ENCODE measurements at regions of chr10 and their contacts with region 1.

Region 1: GRCh38 chr10:122267849-122268737 is 3.0 kb upstream of the BTBD16 start:
- DNase-seq: peak; percentile 86
- H3K4me3 ChIP-seq: no peak overlapping the region; a peak in 1 of 4 replicates
- H3K27ac ChIP-seq: no peak overlapping the region
- H3K4me1 ChIP-seq: no peaks in the 10 kb centered on the region; a peak in 1 of 4 replicates
- H3K27me3 ChIP-seq: no peaks in the 10 kb centered on the region
- CTCF ChIP-seq: peak; percentile 91
- EP300 ChIP-seq: no peak
- RAD21 ChIP-seq: peak; percentile 61

Region 2: GRCh38 chr10:121956111-121957061 is 311.7 kb before region 1 on chr10:
- CTCF ChIA-PET with region 1: no interaction called
- POLR2A ChIA-PET with region 1: no interaction called
- DNase-seq: no peak
- H3K4me3 ChIP-seq: no peak overlapping the region
- H3K27ac ChIP-seq: peak overlapping the region in 1 of 2 experiments; percentile 24; a peak in 1 of 4 replicates
- H3K4me1 ChIP-seq: peaks cover 0 to 10% of the 10 kb centered on the region in 2 experiments; a peak in 1 of 4 replicates
- H3K27me3 ChIP-seq: no peaks in the 10 kb centered on the region
- CTCF ChIP-seq: no peak
- EP300 ChIP-seq: no peak
- RAD21 ChIP-seq: no peak

Region 3: GRCh38 chr10:122213766-122214165 is 54.3 kb before region 1 on chr10:
- CTCF ChIA-PET with region 1: interaction called, 10 read pairs
- POLR2A ChIA-PET with region 1: no interaction called
- DNase-seq: peak; percentile 78
- H3K4me3 ChIP-seq: no peak overlapping the region
- H3K27ac ChIP-seq: peak overlapping the region in 1 of 2 experiments; percentile 83; a peak in 2 of 4 replicates
- H3K4me1 ChIP-seq: peaks cover 0 to 44% of the 10 kb centered on the region in 2 experiments; a peak in 2 of 4 replicates
- H3K27me3 ChIP-seq: no peaks in the 10 kb centered on the region
- CTCF ChIP-seq: no peak
- EP300 ChIP-seq: no peak
- RAD21 ChIP-seq: peak; percentile 74

Region 4: GRCh38 chr10:122243550-122243949 is 24.5 kb before region 1 on chr10:
- CTCF ChIA-PET with region 1: interaction called, 25 read pairs
- POLR2A ChIA-PET with region 1: interaction called, 3 read pairs
- DNase-seq: no peak
- H3K4me3 ChIP-seq: no peak overlapping the region
- H3K27ac ChIP-seq: no peak overlapping the region
- H3K4me1 ChIP-seq: peaks cover 0 to 2% of the 10 kb centered on the region in 2 experiments; a peak in 1 of 4 replicates
- H3K27me3 ChIP-seq: no peaks in the 10 kb centered on the region
- CTCF ChIP-seq: no peak
- EP300 ChIP-seq: no peak
- RAD21 ChIP-seq: no peak

Region 5: GRCh38 chr10:122279725-122280141 is 11.6 kb after region 1 on chr10:
- CTCF ChIA-PET with region 1: interaction called, 50 read pairs
- POLR2A ChIA-PET with region 1: interaction called, 3 read pairs
- DNase-seq: peak; percentile 43
- H3K4me3 ChIP-seq: no peak overlapping the region; a peak in 1 of 4 replicates
- H3K27ac ChIP-seq: no peak overlapping the region
- H3K4me1 ChIP-seq: no peaks in the 10 kb centered on the region
- H3K27me3 ChIP-seq: no peaks in the 10 kb centered on the region
- CTCF ChIP-seq: peak; percentile 55
- EP300 ChIP-seq: no peak
- RAD21 ChIP-seq: peak; percentile 69

Region 6: DNA sequence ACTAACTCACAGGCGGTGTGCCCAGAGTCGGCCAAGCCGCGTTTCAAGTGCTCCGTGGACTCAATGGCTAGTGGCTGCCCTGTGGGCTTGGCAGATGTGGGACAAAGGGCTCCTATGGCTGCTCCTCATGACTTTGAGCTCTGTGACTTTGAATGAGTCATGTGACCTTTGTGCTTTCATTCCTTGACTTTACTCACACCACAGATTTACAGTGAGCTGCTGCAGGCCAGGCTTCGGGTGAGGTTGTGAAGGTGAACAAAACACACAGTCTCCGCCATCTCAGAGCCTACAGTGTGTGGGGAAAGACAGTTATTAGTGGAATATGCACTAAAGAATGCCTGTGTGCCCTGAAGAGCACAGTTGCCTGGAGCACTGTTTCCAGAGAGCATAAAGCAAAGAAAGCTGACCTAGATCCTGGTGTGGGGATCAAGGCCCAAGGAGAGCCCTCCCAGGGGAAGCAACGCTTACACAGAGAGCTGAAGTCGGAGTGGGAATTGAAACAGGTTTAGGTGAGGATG is 76.7 kb after region 1 on chr10:
- CTCF ChIA-PET with region 1: no interaction called
- POLR2A ChIA-PET with region 1: no interaction called
- DNase-seq: no peak
- H3K4me3 ChIP-seq: no peak overlapping the region
- H3K27ac ChIP-seq: no peak overlapping the region
- H3K4me1 ChIP-seq: no peaks in the 10 kb centered on the region
- H3K27me3 ChIP-seq: no peaks in the 10 kb centered on the region
- CTCF ChIP-seq: no peak
- EP300 ChIP-seq: no peak
- RAD21 ChIP-seq: no peak

Region 7: DNA sequence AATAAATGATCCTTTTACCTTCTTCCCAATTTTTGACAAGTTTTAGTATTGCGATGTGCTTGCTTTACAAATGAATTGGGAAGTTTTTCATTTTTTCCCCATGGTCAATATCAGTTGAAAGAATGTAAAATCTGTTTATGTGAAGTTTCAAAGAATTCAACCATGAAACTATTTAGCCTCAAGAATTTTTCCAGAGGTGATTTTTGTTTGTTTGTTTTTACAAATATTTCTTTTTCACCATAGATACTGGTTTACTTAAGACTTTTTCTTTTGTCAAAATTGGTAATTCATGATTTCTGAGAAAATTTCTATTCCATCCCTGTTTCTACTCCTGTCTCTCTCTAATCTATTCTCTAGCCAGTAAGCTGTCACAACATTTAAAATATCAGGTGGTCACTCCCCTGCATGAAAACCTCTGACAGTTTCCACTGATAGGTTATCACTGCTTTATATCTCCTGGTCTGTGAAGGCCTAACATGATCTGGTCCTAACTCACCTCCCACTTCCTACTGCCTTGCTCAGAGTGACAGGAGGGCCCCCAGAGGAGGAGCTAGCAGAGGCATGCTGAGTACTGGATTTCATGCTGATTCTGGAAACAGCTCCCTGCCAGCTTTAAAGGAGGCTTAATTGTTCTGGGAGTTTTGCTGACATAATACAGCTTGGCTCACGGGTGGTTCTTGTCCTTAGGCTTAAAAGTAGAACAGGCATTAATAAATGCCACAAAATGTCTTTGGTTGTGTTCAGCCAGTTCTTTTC is 178.8 kb after region 1 on chr10:
- CTCF ChIA-PET with region 1: no interaction called
- POLR2A ChIA-PET with region 1: no interaction called
- DNase-seq: no peak
- H3K4me3 ChIP-seq: no peak overlapping the region
- H3K27ac ChIP-seq: no peak overlapping the region
- H3K4me1 ChIP-seq: no peaks in the 10 kb centered on the region; a peak in 1 of 4 replicates
- H3K27me3 ChIP-seq: no peaks in the 10 kb centered on the region
- CTCF ChIP-seq: no peak
- EP300 ChIP-seq: no peak
- RAD21 ChIP-seq: no peak

Measured in SK-N-SH (cell line).